ENCODE measurements at regions of chr5 and their contacts with region 1.

Region 1: DNA sequence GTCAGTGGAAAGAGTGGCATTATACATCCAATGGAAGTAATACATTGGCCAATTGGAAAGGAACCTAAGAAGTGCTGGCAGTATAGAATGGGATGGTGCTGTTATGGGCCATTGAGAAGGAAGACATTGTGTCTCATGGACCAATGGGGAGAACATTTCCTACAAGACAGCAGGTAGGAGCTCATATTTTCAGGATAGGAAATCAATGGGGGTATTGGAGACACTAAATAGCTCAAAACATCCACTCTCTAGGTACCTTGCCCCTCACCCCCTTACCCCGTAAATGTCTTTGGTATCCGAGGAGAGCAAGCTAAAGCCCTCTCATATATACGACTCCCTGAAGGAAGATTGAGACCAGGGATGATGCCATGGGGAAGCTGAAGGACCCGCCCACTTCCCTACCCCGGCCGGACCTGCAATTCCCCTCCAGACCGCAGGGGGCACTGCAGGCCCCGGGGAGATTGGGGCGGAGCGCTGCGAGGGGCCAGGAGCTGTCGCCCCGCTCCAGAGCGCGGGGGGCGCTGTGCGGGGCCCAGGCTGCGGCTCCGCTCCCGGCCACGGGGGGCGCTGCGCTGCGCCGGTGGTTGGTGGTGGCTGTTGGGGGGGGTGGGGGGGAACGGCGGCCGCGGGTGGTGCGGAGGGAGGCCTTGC is at the start of gene KDM3B:
- DNase-seq: peak; percentile 90
- ATAC-seq: peak; percentile 73
- H3K4me3 Mint-ChIP-seq: peak within 1 kb of the TSS; percentile 94
- H3K27ac Mint-ChIP-seq: peak within 1 kb of the TSS; percentile 96
- H3K4me1 Mint-ChIP-seq: peaks cover 45% of the 10 kb centered on the region
- H3K27me3 Mint-ChIP-seq: no peaks in the 10 kb centered on the region
- total RNA-seq, gene KDM3B: 53.1 to 55.0 TPM

Region 2: DNA sequence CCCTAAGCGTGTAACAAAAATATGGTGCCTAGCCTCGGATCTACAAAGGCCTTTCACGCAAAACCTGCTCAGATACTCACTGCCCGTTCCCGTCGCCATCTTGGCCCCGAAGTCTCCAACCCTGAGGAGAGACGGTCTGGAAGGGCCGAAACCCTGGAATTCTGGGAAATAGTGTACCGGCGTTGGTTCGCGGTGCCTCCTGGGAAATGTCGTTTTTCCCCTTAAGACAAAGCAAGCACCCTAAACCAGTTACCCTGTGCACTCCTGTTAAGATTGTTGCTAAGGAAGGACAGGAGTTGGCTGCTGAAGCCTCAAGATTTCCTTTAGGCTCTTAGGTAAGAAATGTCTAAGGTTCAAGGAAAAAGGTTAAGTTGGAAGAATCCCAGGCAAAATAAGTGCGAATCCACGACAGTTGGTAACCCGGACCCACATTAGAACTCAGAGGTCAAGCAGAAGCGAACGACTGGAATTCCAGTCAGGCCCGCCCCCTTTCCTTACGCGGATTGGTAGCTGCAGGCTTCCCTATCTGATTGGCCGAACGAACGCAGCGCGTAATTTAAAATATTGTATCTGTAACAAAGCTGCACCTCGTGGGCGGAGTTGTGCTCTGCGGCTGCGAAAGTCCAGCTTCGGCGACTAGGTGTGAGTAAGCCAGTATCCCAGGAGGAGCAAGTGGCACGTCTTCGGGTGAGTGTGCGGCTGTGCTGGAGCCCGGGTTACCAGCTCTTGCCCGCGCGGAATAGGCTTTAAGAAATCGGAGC is 173.5 kb before region 1 on chr5 and contains the starts of genes BRD8 and KIF20A:
- CTCF ChIA-PET with region 1: interaction called, 72 read pairs
- POLR2A ChIA-PET with region 1: interaction called, 21 read pairs
- DNase-seq: peak; percentile 97
- ATAC-seq: peak; percentile 90
- H3K4me3 Mint-ChIP-seq: no peak within 1 kb of the TSS
- H3K27ac Mint-ChIP-seq: no peak within 1 kb of the TSS
- H3K4me1 Mint-ChIP-seq: peaks cover 15% of the 10 kb centered on the region
- H3K27me3 Mint-ChIP-seq: no peaks in the 10 kb centered on the region
- total RNA-seq, gene BRD8: 72.3 to 76.3 TPM
- total RNA-seq, gene KIF20A: 70.1 to 72.0 TPM

Region 3: GRCh38 chr5:138213161-138214029 is 138.8 kb before region 1 on chr5 and contains the start of gene CDC23:
- CTCF ChIA-PET with region 1: interaction called, 12 read pairs
- POLR2A ChIA-PET with region 1: interaction called, 6 read pairs
- DNase-seq: peak; percentile 96
- ATAC-seq: peak; percentile 99
- H3K4me3 Mint-ChIP-seq: peak within 1 kb of the TSS; percentile 99
- H3K27ac Mint-ChIP-seq: peak within 1 kb of the TSS; percentile 98
- H3K4me1 Mint-ChIP-seq: peaks cover 22% of the 10 kb centered on the region
- H3K27me3 Mint-ChIP-seq: no peaks in the 10 kb centered on the region
- total RNA-seq, gene CDC23: 34.1 to 36.6 TPM

Region 4: DNA sequence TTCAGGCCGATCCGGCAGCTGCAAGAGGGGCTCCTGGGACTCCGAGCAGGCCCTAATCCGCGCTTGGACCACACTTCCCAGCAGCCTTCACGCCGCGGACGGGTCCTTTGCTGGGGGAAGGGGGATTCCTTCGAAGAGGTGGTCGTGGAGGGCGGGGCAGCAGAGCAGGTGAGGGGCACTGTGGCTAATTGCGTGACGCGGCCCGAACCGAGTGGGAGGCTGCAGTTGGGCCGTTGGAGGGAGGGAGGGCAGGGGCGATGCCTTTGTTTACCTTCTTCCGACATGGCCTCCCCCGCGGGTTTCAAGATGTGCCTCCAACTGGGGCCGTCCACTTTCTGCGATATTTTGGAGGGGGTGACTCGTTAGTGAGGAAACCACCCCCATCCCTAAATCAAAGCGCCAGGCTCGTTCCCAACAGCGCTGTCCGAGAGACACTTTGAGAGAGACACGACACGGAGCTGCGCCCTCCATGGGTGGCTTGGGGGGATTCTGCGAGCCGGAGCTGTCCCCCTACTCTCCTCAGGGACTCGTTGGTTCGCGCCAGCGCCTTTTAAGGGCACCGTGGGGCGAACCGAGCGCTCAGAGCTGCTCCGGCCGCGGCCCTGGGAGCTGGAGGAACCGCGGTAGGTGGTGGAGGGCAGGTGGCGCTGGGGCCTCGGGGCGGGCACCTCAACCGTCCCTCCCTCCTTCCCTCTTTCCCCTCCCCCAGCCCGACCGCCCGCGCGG is 14.3 kb before region 1 on chr5 and contains the start of gene FAM53C:
- CTCF ChIA-PET with region 1: interaction called, 430 read pairs
- POLR2A ChIA-PET with region 1: interaction called, 113 read pairs
- DNase-seq: peak; percentile 93
- ATAC-seq: peak; percentile 88
- H3K4me3 Mint-ChIP-seq: peak within 1 kb of the TSS; percentile 80
- H3K27ac Mint-ChIP-seq: peak within 1 kb of the TSS; percentile 100
- H3K4me1 Mint-ChIP-seq: peaks cover 40% of the 10 kb centered on the region
- H3K27me3 Mint-ChIP-seq: no peaks in the 10 kb centered on the region
- total RNA-seq, gene FAM53C: 26.9 to 29.9 TPM

Region 5: DNA sequence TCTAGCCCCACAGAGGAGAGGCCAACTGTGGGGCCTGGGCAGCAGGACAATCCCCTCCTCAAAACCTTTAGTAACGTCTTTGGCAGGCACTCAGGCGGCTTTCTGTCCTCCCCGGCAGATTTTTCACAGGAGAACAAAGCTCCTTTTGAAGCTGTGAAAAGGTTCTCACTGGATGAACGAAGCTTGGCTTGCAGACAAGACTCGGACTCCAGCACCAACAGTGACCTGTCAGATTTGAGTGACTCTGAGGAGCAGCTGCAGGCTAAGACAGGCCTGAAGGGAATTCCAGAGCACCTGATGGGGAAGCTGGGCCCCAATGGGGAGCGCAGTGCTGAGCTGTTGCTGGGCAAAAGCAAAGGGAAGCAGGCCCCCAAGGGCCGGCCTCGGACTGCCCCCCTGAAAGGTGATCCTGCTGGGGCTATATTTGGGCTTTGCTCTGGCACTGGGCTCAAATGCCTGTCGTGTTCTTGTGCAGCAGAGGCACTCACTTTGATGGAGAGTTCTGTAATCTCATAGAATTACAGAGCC is 39.7 kb after region 1 on chr5:
- CTCF ChIA-PET with region 1: interaction called, 10 read pairs
- POLR2A ChIA-PET with region 1: no interaction called
- DNase-seq: no peak
- ATAC-seq: no peak
- H3K4me3 Mint-ChIP-seq: no peak overlapping the region
- H3K27ac Mint-ChIP-seq: no peak overlapping the region
- H3K4me1 Mint-ChIP-seq: no peaks in the 10 kb centered on the region
- H3K27me3 Mint-ChIP-seq: no peaks in the 10 kb centered on the region

Region 6: GRCh38 chr5:138438724-138439476 is 86.7 kb after region 1 on chr5 and contains the start of gene REEP2:
- CTCF ChIA-PET with region 1: interaction called, 12 read pairs
- POLR2A ChIA-PET with region 1: interaction called, 3 read pairs
- DNase-seq: peak; percentile 60
- ATAC-seq: peak; percentile 90
- H3K4me3 Mint-ChIP-seq: peak within 1 kb of the TSS; percentile 71
- H3K27ac Mint-ChIP-seq: peak within 1 kb of the TSS; percentile 6
- H3K4me1 Mint-ChIP-seq: peaks cover 12% of the 10 kb centered on the region
- H3K27me3 Mint-ChIP-seq: peaks cover 5% of the 10 kb centered on the region
- total RNA-seq, gene REEP2: 0.68 to 1.1 TPM